Caco-2 (cell line): ENCODE measurements at regions of chr6 and their contacts with region 1.

Region 1: DNA sequence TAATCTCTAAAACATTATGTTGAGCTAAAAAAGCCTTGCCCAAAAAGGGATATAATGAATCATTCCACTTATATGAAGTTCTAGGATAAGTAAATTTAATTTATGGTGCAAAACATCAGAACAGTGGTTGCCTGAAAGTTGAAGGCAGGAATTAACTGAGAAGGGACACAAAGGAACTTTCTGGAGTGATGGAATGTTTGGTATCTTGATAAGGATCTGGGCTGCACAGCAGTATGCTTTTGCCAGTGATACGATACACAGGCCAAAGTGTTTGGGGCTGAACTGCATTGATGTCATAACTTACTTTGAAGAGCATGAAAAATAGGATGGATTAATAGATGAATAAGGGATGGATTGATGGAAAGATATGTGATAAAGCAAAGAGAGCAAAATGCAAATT is 146.1 kb upstream of the LRFN2 start:
- DNase-seq: peak in 1 of 2 experiments; percentile 28
- H3K4me3 ChIP-seq: no peak overlapping the region
- H3K4me3 Mint-ChIP-seq: no peak overlapping the region
- H3K27ac Mint-ChIP-seq: peak overlapping the region; percentile 20
- H3K4me1 ChIP-seq: peaks cover 16% of the 10 kb centered on the region
- H3K4me1 Mint-ChIP-seq: peaks cover 23% of the 10 kb centered on the region
- H3K27me3 ChIP-seq: no peaks in the 10 kb centered on the region
- H3K27me3 Mint-ChIP-seq: peaks cover under 1% of the 10 kb centered on the region
- CTCF ChIP-seq: no peak

Region 2: DNA sequence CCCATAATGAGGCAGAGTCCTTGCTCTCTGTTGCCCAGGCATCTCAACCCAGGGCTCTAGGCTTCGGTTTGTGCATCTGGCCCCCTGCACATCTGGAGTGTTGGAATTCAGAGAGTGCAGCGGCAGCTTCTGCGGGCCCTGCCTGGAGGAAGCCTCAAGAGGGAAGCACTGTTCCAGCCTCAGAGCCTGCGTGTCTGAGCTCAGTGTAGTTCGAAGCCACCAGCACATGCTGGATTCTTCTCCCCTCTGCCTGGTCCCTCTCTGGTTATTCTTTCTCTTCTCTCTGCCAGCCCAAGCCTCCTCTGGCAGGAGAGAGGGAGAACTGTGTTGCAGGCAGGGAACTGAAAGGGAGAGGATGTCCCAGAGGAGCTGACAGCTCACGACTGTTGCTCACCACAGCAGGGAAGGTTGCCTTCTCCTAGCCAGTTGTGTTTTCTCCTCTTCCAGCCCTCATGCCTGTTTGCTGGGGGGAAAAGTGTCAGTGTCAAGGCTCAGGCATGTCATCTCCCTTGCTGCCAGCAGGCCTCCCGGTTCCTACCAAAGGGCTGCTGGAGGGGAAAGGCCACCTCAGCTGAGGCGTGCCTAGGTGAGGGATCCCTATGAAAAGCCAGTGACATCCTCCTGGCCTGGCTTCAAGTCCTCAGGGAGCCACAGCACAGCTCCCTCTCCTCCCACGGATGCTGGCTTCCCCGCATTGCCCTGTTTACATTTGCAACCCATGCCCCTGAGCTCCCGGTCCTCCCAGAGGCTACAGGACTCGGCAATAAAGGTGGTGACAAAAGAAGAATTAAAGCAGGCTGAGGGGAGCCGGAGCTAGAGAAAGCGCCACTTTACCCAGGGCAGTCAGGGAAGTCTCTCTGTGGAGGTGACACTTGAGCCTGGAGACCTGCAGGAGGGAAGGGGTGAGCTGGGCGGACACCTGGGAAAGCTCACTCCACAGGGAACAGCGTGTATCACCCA is 20.0 kb before region 1 on chr6:
- CTCF ChIA-PET with region 1: interaction called, 3 read pairs
- POLR2A ChIA-PET with region 1: no interaction called
- intact Hi-C with region 1: loop called (anchors 1 kb)
- DNase-seq: peak in 1 of 2 experiments; percentile 33
- H3K4me3 ChIP-seq: no peak overlapping the region
- H3K4me3 Mint-ChIP-seq: no peak overlapping the region
- H3K27ac Mint-ChIP-seq: no peak overlapping the region
- H3K4me1 ChIP-seq: peaks cover 17% of the 10 kb centered on the region
- H3K4me1 Mint-ChIP-seq: peaks cover 24% of the 10 kb centered on the region
- H3K27me3 ChIP-seq: no peaks in the 10 kb centered on the region
- H3K27me3 Mint-ChIP-seq: no peaks in the 10 kb centered on the region
- CTCF ChIP-seq: peak in 1 of 2 experiments; percentile 27